AG04449 (cell line): ENCODE measurements at regions of chr19 and their contacts with region 1.

Region 1: DNA sequence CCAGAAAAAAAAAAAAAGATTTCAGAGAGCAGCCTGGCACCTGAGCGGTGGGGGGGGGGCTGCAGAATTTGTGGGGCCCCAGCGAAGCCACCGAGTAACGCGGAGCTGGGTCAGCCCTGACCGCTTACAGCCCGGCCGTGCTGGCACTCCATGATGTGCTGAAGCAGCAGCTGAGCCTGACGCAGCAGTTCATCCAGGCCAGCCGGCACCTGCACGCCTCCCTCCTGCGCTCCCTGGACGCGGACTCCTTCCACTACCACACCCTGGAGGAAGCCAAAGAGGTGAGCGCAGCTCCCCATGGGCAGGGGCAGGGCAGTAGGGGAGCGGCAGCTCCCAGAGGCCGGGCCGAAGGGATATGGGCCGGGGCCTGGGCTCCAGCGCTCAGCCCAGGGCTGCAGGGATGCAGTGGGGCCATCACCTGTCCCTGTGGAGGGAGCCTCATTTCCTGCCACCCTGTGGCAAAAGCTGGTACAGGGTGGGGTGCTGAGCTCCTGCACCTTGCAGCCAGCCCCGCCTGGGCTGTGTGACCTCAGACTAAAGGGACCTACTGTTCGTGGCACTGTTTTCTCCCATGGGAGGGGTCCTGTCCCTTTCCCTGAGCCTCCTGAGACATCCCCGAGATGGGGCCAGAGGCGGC is 18.3 kb downstream of the C19orf44 start:
- DNase-seq: no peak
- H3K4me3 ChIP-seq: no peak overlapping the region
- CTCF ChIP-seq: no peak

Region 2: DNA sequence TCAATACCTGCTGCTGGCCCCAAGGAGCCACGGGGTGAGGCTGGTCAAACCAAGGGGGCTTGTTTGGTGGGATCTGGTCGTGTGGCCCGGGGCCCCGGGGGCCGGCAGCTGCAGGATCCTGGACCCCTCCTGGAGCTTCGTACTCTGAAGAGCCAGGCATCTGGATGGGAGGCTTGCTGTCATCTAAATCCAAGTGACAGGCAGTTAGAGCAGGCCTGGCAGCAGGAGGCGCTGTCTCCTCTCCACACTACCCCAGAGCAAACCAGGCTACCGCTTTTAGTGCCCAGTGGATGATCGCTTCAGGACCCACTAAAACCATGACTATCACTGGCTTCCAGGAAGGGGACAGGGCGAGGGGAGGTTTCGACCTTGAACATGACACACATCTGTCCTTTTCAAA is 13.6 kb after region 1 on chr19:
- CTCF ChIA-PET with region 1: interaction called, 10 read pairs
- POLR2A ChIA-PET with region 1: interaction called, 3 read pairs
- DNase-seq: no peak
- H3K4me3 ChIP-seq: no peak overlapping the region
- CTCF ChIP-seq: no peak